Activated naive CD4-positive, alpha-beta T cell treated with anti-CD3 and anti-CD28 coated beads for 36 hours (primary cell): ENCODE measurements at regions of chr5 and their contacts with region 1.

Region 1: GRCh38 chr5:73215891-73216610 is 43.1 kb downstream of the TMEM174 start:
- DNase-seq: peak; percentile 77
- H3K4me3 Mint-ChIP-seq: no peak overlapping the region
- H3K27ac Mint-ChIP-seq: no peak overlapping the region
- H3K4me1 Mint-ChIP-seq: peaks cover 17% of the 10 kb centered on the region
- H3K27me3 Mint-ChIP-seq: peaks cover 84% of the 10 kb centered on the region

Region 2: DNA sequence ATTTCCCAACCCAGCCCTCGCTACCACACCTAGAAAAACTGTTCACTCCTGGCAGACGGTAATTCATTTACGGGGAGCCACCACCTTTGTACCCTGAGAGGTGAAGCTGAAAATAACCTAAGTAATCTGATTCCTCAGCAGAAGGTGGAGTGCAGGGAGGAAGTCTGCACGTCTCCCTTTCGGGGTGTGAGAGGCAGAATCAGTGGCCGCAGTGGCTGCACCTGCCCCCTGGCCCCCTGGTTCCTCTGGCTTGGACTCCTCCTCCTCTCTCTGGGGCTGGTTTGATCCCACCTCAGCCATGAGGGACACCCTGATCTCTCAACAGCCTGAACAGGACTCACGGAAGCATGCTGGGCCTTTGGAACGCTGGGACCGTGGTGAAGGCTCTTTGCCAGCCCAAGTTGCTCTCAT is 32.6 kb before region 1 on chr5:
- CTCF ChIA-PET with region 1: no interaction called
- intact Hi-C with region 1: no loop called
- DNase-seq: no peak
- H3K4me3 Mint-ChIP-seq: no peak overlapping the region
- H3K27ac Mint-ChIP-seq: no peak overlapping the region
- H3K4me1 Mint-ChIP-seq: no peaks in the 10 kb centered on the region
- H3K27me3 Mint-ChIP-seq: peaks cover 58% of the 10 kb centered on the region

Region 3: GRCh38 chr5:73233347-73234200 is 17.5 kb after region 1 on chr5:
- CTCF ChIA-PET with region 1: interaction called, 6 read pairs
- intact Hi-C with region 1: loop called (anchors 2 kb)
- DNase-seq: peak; percentile 34
- H3K4me3 Mint-ChIP-seq: peak overlapping the region; percentile 29
- H3K27ac Mint-ChIP-seq: no peak overlapping the region
- H3K4me1 Mint-ChIP-seq: peaks cover 24% of the 10 kb centered on the region
- H3K27me3 Mint-ChIP-seq: peaks cover 70% of the 10 kb centered on the region

Region 4: DNA sequence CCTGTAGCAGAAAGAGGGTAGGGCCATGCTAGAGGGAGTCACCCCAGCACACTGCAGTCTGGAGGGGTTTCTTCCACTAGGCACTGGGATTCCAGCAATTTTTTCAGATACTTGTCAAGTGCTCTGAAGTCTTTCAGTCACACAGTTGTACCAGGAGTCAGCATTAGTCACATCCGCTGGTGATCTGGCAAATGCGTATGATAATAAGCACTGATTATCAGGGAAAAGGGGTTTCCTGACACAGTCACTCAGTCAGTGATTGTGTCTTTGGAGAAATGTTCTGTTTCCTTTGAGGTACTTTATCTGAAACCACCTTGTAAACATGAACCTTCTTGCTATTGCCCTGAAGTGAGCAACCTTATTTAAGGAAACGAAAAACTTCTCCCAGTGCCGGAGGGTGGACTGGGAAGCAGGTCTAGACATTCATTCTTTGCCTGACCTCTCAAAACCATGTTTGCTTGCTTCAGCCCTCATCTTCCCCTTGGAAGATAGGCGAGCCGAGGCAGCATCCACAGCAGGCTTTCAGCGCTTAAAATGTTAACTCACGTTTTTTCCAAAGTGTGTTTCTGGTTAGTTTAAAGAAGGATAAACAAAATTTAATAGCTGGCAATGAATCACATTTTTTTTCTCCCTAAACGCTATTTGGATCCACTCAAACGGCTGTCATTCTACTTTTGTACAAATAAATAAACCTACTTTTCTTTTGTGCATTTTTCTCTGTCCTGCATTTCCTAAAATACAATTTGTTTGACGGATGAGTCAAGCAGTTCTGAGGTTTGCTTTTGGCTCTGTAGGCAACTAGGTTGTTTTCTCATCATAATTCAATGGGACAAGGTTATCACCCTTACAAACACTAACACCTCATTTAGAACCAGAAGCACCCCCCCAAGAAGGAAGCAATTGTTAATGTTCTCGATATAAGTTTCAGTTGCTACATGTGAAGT is 154.9 kb after region 1 on chr5:
- CTCF ChIA-PET with region 1: no interaction called
- intact Hi-C with region 1: no loop called
- DNase-seq: no peak
- H3K4me3 Mint-ChIP-seq: no peak overlapping the region
- H3K27ac Mint-ChIP-seq: no peak overlapping the region
- H3K4me1 Mint-ChIP-seq: no peaks in the 10 kb centered on the region
- H3K27me3 Mint-ChIP-seq: peaks cover 51% of the 10 kb centered on the region

Region 5: GRCh38 chr5:73387601-73388305 is 171.7 kb after region 1 on chr5:
- CTCF ChIA-PET with region 1: no interaction called
- intact Hi-C with region 1: loop called (anchors 10 kb)
- DNase-seq: peak; percentile 60
- H3K4me3 Mint-ChIP-seq: no peak overlapping the region
- H3K27ac Mint-ChIP-seq: no peak overlapping the region
- H3K4me1 Mint-ChIP-seq: peaks cover 19% of the 10 kb centered on the region
- H3K27me3 Mint-ChIP-seq: peaks cover 25% of the 10 kb centered on the region

Region 6: GRCh38 chr5:73534011-73534644 is 318.1 kb after region 1 on chr5:
- CTCF ChIA-PET with region 1: no interaction called
- intact Hi-C with region 1: loop called (anchors 10 kb)
- DNase-seq: no peak
- H3K4me3 Mint-ChIP-seq: no peak overlapping the region
- H3K27ac Mint-ChIP-seq: no peak overlapping the region
- H3K4me1 Mint-ChIP-seq: no peaks in the 10 kb centered on the region
- H3K27me3 Mint-ChIP-seq: peaks cover 17% of the 10 kb centered on the region